B cell (primary cell): ENCODE measurements at regions of chr17 and their contacts with region 1.

Region 1: DNA sequence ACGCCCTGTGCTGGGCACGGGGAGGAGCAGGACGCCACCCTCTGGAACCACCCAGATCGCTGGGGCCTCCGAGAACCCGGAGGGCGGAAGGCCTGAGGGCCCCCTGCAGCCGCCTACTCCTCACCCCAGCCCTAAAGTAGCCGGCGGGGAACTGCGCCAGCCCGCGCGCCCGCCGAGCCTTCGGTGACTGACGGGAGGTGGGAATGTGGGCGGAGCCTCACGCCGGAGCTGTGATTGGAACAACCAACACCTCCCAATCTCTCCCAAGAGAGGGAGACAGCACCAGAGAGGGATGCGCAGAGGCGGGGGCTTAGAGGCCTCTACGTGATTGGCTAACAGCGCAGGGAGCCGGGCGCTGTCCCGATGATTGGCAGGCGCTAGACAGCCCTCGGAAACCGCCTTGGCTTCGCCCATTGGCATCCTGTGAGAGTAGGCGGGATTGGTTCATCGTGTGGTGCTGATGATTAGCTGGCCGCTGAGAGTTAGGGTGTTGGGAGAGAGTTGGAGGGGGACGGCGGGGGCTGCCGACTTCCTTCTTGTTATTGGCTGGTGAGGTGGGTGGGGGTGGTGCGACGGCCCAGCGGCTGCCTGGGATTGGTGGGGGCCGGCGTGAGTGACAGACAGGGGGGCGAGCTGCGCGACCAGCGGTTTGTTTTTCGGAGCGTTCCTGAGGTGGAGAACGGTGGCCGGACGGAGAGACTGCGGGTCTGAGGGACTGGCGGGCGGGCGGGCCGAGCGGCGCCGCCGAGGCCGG is at the start of gene MAP3K3:
- DNase-seq: peak; percentile 98
- ATAC-seq: peak; percentile 86
- H3K4me3 ChIP-seq: peak within 1 kb of the TSS; percentile 67 to 90 (median 71)
- H3K4me3 Mint-ChIP-seq: peak within 1 kb of the TSS; percentile 99
- H3K27ac ChIP-seq: peak within 1 kb of the TSS; percentile 47 to 79
- H3K27ac Mint-ChIP-seq: peak within 1 kb of the TSS; percentile 97
- H3K4me1 ChIP-seq: peaks cover 18 to 24% of the 10 kb centered on the region in 2 donors
- H3K4me1 Mint-ChIP-seq: peaks cover 39% of the 10 kb centered on the region
- H3K27me3 ChIP-seq: no peaks in the 10 kb centered on the region
- H3K27me3 Mint-ChIP-seq: no peaks in the 10 kb centered on the region
- CTCF ChIP-seq: no peak
- total RNA-seq, gene MAP3K3: 74.7 and 80.0 TPM in 2 replicates

Region 2: DNA sequence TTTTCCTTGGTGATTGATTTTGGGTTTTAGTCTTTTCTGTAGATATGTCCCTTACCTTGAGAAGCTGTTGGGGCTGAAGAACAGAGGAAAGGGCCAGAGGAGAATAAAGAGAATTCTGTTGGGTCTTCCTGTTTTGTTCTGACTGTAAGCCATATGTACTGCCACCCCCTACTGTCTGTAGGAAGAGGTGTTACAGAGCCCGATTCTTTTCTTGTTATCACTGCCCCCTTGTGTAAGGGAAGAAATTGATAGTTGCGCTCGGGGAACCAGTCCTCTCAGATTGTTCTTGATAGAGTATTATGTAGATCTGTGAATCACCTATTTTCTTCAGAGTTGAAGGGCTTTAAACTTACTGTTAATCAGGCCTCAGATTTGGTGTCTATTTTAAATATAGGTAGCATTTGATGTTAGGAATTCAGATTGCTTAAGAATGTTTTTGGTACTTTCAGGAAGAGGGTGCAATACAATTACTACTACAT is 653.5 kb before region 1 on chr17:
- CTCF ChIA-PET with region 1: no interaction called
- POLR2A ChIA-PET with region 1: no interaction called
- intact Hi-C with region 1: loop called (anchors 5 kb)
- DNase-seq: peak; percentile 83
- ATAC-seq: peak; percentile 39
- H3K4me3 ChIP-seq: no peak overlapping the region
- H3K4me3 Mint-ChIP-seq: peak overlapping the region; percentile 74
- H3K27ac ChIP-seq: no peak overlapping the region
- H3K27ac Mint-ChIP-seq: peak overlapping the region; percentile 48
- H3K4me1 ChIP-seq: peaks cover 18 to 20% of the 10 kb centered on the region in 2 donors
- H3K4me1 Mint-ChIP-seq: peaks cover 21% of the 10 kb centered on the region
- H3K27me3 ChIP-seq: no peaks in the 10 kb centered on the region
- H3K27me3 Mint-ChIP-seq: no peaks in the 10 kb centered on the region
- CTCF ChIP-seq: peak; percentile 85

Region 3: DNA sequence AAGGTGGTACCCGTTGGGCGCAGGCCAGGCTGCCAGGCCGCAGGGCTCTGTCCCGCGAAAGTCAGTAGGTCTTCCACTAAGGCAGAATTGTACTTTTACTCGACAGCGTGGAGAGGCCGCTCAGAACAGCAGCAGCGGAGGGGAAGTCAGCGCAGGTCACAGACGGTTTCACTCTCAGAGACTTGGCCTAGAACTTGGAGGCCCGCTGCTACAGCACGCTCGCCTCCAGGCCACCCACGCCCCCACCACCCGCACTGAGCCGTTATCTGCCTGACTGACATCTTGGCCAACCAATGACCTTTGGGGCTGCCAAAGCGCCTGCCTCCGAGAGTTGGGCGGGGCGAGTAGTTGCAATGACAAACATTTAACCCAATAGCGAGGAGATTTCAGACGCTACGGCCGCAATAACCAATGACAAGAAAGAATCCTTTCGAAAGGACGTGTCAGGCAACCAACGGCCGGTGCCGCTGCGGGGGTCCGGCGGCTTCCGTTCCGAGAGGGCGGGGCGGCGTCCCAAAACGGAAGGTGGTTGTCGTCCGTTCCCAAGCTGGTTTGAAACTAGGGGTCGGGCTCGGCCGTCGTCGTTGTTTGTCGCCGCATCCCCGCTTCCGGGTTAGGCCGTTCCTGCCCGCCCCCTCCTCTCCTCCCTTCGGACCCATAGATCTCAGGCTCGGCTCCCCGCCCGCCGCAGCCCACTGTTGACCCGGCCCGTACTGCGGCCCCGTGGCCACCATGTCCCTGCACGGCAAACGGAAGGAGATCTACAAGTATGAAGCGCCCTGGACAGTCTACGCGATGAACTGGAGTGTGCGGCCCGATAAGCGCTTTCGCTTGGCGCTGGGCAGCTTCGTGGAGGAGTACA is 71.8 kb before region 1 on chr17 and contains the start of gene DCAF7:
- CTCF ChIA-PET with region 1: no interaction called
- POLR2A ChIA-PET with region 1: interaction called, 9 read pairs
- intact Hi-C with region 1: loop called (anchors 1 kb)
- DNase-seq: peak; percentile 100
- ATAC-seq: peak; percentile 94
- H3K4me3 ChIP-seq: peak within 1 kb of the TSS; percentile 73 to 91 (median 81)
- H3K4me3 Mint-ChIP-seq: peak within 1 kb of the TSS; percentile 87
- H3K27ac ChIP-seq: peak within 1 kb of the TSS; percentile 81 to 95
- H3K27ac Mint-ChIP-seq: peak within 1 kb of the TSS; percentile 94
- H3K4me1 ChIP-seq: peaks cover 41 to 47% of the 10 kb centered on the region in 2 donors
- H3K4me1 Mint-ChIP-seq: peaks cover 44% of the 10 kb centered on the region
- H3K27me3 ChIP-seq: no peaks in the 10 kb centered on the region
- H3K27me3 Mint-ChIP-seq: no peaks in the 10 kb centered on the region
- CTCF ChIP-seq: no peak
- total RNA-seq, gene DCAF7: 84.7 and 84.8 TPM in 2 replicates

Region 4: GRCh38 chr17:63589646-63590045 is 32.3 kb before region 1 on chr17:
- CTCF ChIA-PET with region 1: no interaction called
- POLR2A ChIA-PET with region 1: no interaction called
- intact Hi-C with region 1: no loop called
- DNase-seq: no peak
- ATAC-seq: no peak
- H3K4me3 ChIP-seq: no peak overlapping the region
- H3K4me3 Mint-ChIP-seq: no peak overlapping the region
- H3K27ac ChIP-seq: no peak overlapping the region
- H3K27ac Mint-ChIP-seq: no peak overlapping the region
- H3K4me1 ChIP-seq: no peaks in the 10 kb centered on the region
- H3K4me1 Mint-ChIP-seq: no peaks in the 10 kb centered on the region
- H3K27me3 ChIP-seq: no peaks in the 10 kb centered on the region
- H3K27me3 Mint-ChIP-seq: no peaks in the 10 kb centered on the region
- CTCF ChIP-seq: no peak

Region 5: GRCh38 chr17:63611354-63611753 is 10.6 kb before region 1 on chr17:
- CTCF ChIA-PET with region 1: interaction called, 30 read pairs
- POLR2A ChIA-PET with region 1: interaction called, 3 read pairs
- intact Hi-C with region 1: loop called (anchors 1 kb)
- DNase-seq: no peak
- ATAC-seq: no peak
- H3K4me3 ChIP-seq: no peak overlapping the region
- H3K4me3 Mint-ChIP-seq: no peak overlapping the region
- H3K27ac ChIP-seq: no peak overlapping the region
- H3K27ac Mint-ChIP-seq: no peak overlapping the region
- H3K4me1 ChIP-seq: no peaks in the 10 kb centered on the region
- H3K4me1 Mint-ChIP-seq: no peaks in the 10 kb centered on the region
- H3K27me3 ChIP-seq: no peaks in the 10 kb centered on the region
- H3K27me3 Mint-ChIP-seq: no peaks in the 10 kb centered on the region
- CTCF ChIP-seq: no peak

Region 6: DNA sequence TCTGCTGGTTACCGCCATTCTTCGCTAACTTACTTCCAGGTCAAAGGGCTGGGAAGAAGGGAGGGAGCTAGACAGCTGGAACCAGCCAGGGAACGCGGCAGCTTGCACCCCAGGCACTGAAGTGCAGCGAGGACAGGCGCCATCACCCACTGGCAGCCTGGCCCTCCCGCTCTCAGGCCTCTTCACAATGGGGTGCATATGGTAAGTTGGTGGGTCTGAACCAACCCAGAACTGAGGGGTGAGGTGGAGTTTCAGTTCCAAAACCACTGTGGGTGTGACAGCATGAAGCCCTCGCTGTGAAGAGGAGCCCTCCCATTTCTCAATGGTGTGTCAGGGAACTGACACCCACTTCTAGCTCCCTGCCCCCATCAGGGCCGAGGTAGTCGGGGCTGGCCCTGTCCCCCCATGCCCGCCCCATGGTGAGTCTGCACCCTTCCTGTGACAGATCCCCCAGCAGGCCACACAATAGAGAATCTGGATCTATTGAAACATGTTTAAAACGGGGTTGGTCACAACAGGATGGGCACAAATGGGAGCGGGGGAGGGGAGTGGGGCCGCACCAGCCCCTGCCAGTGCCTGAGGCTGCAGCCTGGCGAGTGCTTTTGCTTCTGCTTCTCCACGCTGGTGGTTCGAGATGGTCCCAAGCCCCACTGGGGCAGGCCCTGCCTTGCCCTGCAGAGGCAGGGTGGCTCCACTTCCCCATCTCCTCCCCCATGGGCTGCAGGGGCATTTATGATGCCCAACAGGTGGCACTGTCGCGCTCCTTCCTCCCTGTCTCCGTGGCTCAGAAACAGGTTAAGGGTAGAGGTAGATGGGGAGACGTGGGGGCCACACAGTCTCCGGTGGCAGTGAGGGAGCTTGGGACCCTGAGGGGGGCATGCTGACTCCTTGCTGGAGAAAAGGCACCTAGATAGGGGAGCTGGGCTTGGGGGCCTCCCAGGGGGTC is 75.7 kb after region 1 on chr17:
- CTCF ChIA-PET with region 1: interaction called, 5 read pairs
- POLR2A ChIA-PET with region 1: interaction called, 48 read pairs
- intact Hi-C with region 1: loop called (anchors 1 kb)
- DNase-seq: peak; percentile 96
- ATAC-seq: peak; percentile 39
- H3K4me3 ChIP-seq: peak overlapping the region; percentile 70 to 100 (median 96)
- H3K4me3 Mint-ChIP-seq: peak overlapping the region; percentile 94
- H3K27ac ChIP-seq: peak overlapping the region; percentile 82 to 95
- H3K27ac Mint-ChIP-seq: peak overlapping the region; percentile 98
- H3K4me1 ChIP-seq: peaks cover 54 to 66% of the 10 kb centered on the region in 2 donors
- H3K4me1 Mint-ChIP-seq: peaks cover 66% of the 10 kb centered on the region
- H3K27me3 ChIP-seq: no peaks in the 10 kb centered on the region
- H3K27me3 Mint-ChIP-seq: no peaks in the 10 kb centered on the region
- CTCF ChIP-seq: peak; percentile 85

Region 7: GRCh38 chr17:63735691-63736090 is 113.7 kb after region 1 on chr17:
- CTCF ChIA-PET with region 1: no interaction called
- POLR2A ChIA-PET with region 1: no interaction called
- intact Hi-C with region 1: no loop called
- DNase-seq: no peak
- ATAC-seq: no peak
- H3K4me3 ChIP-seq: no peak overlapping the region
- H3K4me3 Mint-ChIP-seq: no peak overlapping the region
- H3K27ac ChIP-seq: no peak overlapping the region
- H3K27ac Mint-ChIP-seq: no peak overlapping the region
- H3K4me1 ChIP-seq: peaks cover 6 to 7% of the 10 kb centered on the region in 2 donors
- H3K4me1 Mint-ChIP-seq: peaks cover 10% of the 10 kb centered on the region
- H3K27me3 ChIP-seq: no peaks in the 10 kb centered on the region
- H3K27me3 Mint-ChIP-seq: no peaks in the 10 kb centered on the region
- CTCF ChIP-seq: no peak

Region 8: DNA sequence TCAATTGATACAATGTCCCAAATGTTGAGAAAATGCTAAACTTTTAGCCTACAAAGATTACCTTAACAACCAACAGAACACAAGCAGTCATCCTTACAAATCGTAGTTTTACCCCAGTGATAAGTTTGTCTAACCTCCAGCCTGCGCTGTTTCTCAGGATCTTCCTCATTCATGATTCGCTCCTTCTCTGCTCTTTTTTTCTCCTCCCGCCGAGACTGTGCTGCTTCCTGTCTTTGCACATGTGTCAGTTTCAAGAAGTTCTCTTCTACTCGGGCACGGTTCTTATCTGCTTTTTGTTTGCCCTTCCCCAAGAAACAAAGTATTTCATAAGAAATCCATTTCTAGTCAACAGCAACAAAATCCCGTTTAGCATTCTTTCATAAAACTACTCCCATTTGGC is 129.9 kb after region 1 on chr17:
- CTCF ChIA-PET with region 1: no interaction called
- POLR2A ChIA-PET with region 1: no interaction called
- intact Hi-C with region 1: no loop called
- DNase-seq: peak; percentile 58
- ATAC-seq: peak; percentile 36
- H3K4me3 ChIP-seq: no peak overlapping the region
- H3K4me3 Mint-ChIP-seq: peak overlapping the region; percentile 4
- H3K27ac ChIP-seq: peak overlapping the region; percentile 7 to 64
- H3K27ac Mint-ChIP-seq: peak overlapping the region; percentile 67
- H3K4me1 ChIP-seq: peaks cover 9% of the 10 kb centered on the region in 2 donors
- H3K4me1 Mint-ChIP-seq: peaks cover 8% of the 10 kb centered on the region
- H3K27me3 ChIP-seq: no peaks in the 10 kb centered on the region
- H3K27me3 Mint-ChIP-seq: no peaks in the 10 kb centered on the region
- CTCF ChIP-seq: no peak

Region 9: DNA sequence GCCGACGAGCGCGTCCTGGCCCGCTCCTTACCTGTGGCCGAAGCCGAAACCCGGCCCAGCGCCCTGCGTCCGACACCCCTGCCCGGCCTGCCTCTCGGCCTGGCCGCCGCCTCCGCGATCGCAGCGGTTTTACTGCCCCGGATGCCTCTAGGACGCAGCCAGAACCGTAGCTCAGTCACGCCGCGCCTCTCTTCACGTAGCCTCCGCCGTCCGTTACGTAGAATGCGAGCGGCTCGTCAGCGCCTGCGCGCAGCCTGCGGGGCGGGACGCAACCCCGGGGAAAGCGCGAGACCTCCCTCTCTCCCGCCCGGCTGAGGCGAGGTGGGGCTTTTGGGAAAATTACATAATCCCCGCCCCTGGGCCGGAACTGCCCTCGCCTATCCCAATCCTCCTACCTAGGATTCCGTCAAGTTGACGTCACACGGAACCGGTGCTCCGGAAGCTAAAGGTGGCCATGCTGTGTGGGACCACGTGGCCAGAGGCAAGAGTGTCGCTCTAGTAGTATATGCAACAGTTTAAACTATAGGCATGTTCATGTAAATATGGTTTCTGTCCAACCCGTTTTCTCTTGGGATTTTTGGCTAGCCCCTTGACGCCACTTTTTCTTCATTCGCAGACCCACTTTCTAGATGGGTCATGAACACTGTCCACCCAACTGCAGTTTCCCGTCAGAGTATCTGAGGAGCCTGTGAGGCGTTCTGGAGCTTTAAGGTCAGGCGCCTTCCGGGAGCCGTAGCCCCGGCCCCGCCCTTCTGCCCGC is 151.6 kb after region 1 on chr17 and contains the start of gene CCDC47:
- CTCF ChIA-PET with region 1: no interaction called
- POLR2A ChIA-PET with region 1: interaction called, 9 read pairs
- intact Hi-C with region 1: loop called (anchors 1 kb)
- DNase-seq: peak; percentile 99
- ATAC-seq: peak; percentile 78
- H3K4me3 ChIP-seq: peak within 1 kb of the TSS; percentile 78 to 99 (median 90)
- H3K4me3 Mint-ChIP-seq: peak within 1 kb of the TSS; percentile 98
- H3K27ac ChIP-seq: peak within 1 kb of the TSS; percentile 78 to 94
- H3K27ac Mint-ChIP-seq: peak within 1 kb of the TSS; percentile 99
- H3K4me1 ChIP-seq: peaks cover 28 to 34% of the 10 kb centered on the region in 2 donors
- H3K4me1 Mint-ChIP-seq: peaks cover 51% of the 10 kb centered on the region
- H3K27me3 ChIP-seq: no peaks in the 10 kb centered on the region
- H3K27me3 Mint-ChIP-seq: no peaks in the 10 kb centered on the region
- CTCF ChIP-seq: no peak
- total RNA-seq, gene CCDC47: 36.2 and 39.7 TPM in 2 replicates

Region 10: GRCh38 chr17:63842540-63843386 is 220.8 kb after region 1 on chr17 and contains the start of gene SMARCD2:
- CTCF ChIA-PET with region 1: no interaction called
- POLR2A ChIA-PET with region 1: interaction called, 3 read pairs
- intact Hi-C with region 1: loop called (anchors 1 kb)
- DNase-seq: peak; percentile 99
- ATAC-seq: peak; percentile 93
- H3K4me3 ChIP-seq: peak within 1 kb of the TSS; percentile 65 to 92 (median 89)
- H3K4me3 Mint-ChIP-seq: peak within 1 kb of the TSS; percentile 94
- H3K27ac ChIP-seq: peak within 1 kb of the TSS; percentile 90 to 92
- H3K27ac Mint-ChIP-seq: peak within 1 kb of the TSS; percentile 94
- H3K4me1 ChIP-seq: peaks cover 35 to 51% of the 10 kb centered on the region in 2 donors
- H3K4me1 Mint-ChIP-seq: peaks cover 43% of the 10 kb centered on the region
- H3K27me3 ChIP-seq: no peaks in the 10 kb centered on the region
- H3K27me3 Mint-ChIP-seq: no peaks in the 10 kb centered on the region
- CTCF ChIP-seq: no peak
- total RNA-seq, gene SMARCD2: 124 and 125 TPM in 2 replicates